Breast epithelium (tissue), 4 donors: ENCODE measurements at regions of chr20 and their contacts with region 1.

Region 1: DNA sequence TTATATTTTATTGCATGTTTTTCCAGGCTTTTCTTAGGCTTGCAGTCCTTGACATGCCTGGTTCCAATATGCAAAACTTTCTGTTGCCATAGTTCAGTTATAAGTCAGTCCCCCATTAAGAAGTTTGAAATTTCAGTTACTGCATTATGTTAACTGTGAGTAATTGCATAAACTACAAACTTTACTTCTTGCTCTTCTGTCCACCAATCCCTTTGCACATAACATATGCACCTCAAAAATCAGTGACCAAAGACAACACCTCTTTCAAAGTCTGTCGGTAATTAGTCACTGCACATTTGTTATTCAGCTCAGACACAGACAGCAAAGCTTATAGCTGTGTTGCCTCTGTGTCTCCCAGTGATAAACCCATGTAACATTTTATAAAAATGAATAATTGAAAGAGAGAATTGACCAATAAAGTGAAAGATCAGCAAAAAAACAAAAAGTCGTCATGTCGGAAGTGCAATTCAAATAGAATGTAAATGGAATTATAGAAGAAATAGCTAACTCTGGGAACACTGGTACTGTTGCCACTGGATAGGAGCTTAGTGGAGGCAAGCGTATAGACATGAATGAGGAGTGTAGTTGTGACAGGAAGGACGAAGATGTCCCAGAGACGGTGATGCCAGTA is 50.3 kb upstream of the BTBD3 start:
- DNase-seq: no peak
- H3K4me3 ChIP-seq: no peak overlapping the region
- H3K27ac ChIP-seq: no peak overlapping the region
- H3K4me1 ChIP-seq: no peaks in the 10 kb centered on the region
- H3K27me3 ChIP-seq: no peaks in the 10 kb centered on the region
- CTCF ChIP-seq: no peak
- POLR2A ChIP-seq: no peak

Region 2: GRCh38 chr20:10201321-10201870 is 1666.0 kb before region 1 on chr20:
- intact Hi-C with region 1: loop called (anchors 5 kb)
- DNase-seq: no peak
- H3K4me3 ChIP-seq: no peak overlapping the region
- H3K27ac ChIP-seq: peak overlapping the region in 1 of 2 donors; percentile 28
- H3K4me1 ChIP-seq: no peaks in the 10 kb centered on the region
- H3K27me3 ChIP-seq: no peaks in the 10 kb centered on the region
- CTCF ChIP-seq: no peak
- POLR2A ChIP-seq: no peak

Region 3: DNA sequence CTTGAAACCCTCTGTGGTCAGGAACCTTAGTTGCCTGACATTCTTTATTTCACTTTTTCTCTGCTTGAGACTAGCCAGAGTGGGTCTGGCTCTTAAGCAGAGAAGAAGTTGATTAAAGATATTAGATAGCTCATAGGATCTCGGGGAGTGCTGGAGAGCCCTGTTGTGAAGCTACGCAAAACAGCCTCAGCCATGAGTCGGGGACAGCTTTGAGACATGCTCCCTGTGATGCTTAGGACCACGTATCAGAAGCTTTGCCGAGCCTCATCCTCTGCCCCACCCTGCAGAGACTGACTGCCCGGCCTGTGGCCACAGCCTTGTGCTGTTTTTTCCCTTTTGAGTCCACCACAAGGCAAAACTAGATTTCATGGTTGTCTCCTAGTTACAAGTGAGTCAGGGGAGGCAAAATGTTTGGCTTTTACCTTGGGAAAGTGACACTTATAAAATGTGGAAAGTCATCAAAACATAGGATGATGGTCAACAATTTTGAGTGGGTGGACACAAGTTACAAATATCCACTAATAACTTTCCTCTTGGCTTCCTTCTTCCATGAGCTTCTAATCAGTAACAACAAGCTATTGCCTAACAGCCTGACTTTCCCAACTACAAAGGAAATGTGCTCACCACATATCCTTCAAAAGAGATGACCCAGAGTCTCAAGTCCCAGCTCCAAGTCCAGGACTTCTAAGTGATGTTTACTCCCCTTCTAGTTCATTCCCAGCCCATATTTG is 1302.0 kb before region 1 on chr20:
- intact Hi-C with region 1: loop called (anchors 5 kb)
- DNase-seq: no peak
- H3K4me3 ChIP-seq: no peak overlapping the region
- H3K27ac ChIP-seq: peak overlapping the region; percentile 67 to 83
- H3K4me1 ChIP-seq: no peaks in the 10 kb centered on the region
- H3K27me3 ChIP-seq: no peaks in the 10 kb centered on the region
- CTCF ChIP-seq: no peak
- POLR2A ChIP-seq: no peak

Region 4: DNA sequence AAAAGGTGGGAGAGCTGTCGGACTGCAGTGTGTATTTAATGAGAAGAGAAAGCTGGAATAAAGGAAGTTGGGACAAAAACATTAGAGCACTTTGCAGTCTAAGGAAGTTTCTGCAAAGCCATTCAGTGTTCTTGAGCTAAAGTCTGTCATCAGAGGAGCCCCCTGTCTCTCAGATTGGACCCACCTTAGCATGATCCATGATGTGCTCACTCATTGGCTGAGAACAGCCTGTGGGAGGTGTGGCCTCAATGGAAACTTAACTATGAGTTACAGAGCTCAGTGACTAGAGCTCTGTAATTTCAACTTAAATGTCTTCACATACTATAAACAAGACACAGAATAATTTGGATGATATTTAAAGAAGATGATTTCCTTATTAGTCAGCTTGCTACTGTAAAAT is 487.3 kb after region 1 on chr20:
- intact Hi-C with region 1: loop called (anchors 5 kb)
- DNase-seq: no peak
- H3K4me3 ChIP-seq: no peak overlapping the region
- H3K27ac ChIP-seq: no peak overlapping the region
- H3K4me1 ChIP-seq: no peaks in the 10 kb centered on the region
- H3K27me3 ChIP-seq: no peaks in the 10 kb centered on the region
- CTCF ChIP-seq: no peak
- POLR2A ChIP-seq: no peak

Region 5: GRCh38 chr20:12977328-12978125 is 1110.1 kb after region 1 on chr20:
- intact Hi-C with region 1: loop called (anchors 5 kb)
- DNase-seq: no peak
- H3K4me3 ChIP-seq: no peak overlapping the region
- H3K27ac ChIP-seq: no peak overlapping the region
- H3K4me1 ChIP-seq: no peaks in the 10 kb centered on the region
- H3K27me3 ChIP-seq: no peaks in the 10 kb centered on the region
- CTCF ChIP-seq: no peak
- POLR2A ChIP-seq: no peak